Gastrocnemius medialis (tissue), 4 donors: ENCODE measurements at regions of chr17 and their contacts with region 1.

Region 1: DNA sequence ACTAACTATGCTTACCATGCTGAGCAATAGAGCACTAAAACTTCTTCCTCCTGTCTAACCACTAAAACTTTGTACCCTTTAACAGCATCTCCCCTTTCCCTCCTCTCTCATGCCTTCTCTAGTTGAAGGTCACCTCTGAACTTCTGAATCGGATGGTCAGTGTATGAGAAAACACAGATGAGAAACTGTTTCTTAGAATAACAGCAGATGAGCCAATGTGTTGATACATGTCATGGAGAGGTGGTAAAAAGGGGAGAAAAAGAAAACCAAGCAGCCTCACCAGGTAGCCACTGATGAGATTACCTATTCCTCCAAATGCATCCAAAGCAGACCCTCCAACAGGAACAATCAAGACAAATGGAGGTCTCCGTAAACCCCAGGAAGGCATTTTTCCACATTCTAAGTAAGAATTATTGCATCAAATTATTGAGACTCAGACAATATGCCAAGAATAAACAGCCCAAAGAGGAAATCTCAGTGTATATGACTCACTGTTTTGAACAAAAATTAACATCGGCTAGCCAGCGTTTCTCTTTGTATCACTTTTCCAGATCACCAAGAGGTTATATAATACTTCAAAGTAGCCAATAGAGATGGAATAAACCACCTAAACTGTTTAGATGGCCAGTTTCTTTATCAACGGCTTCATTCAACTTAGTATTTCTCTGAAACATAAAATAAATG is 793.3 kb upstream of the SOX9 start:
- DNase-seq: no peak
- ATAC-seq: no peak
- H3K4me3 ChIP-seq: no peak overlapping the region
- H3K27ac ChIP-seq: no peak overlapping the region
- H3K4me1 ChIP-seq: no peaks in the 10 kb centered on the region
- H3K27me3 ChIP-seq: no peaks in the 10 kb centered on the region
- CTCF ChIP-seq: no peak
- POLR2A ChIP-seq: no peak

Region 2: DNA sequence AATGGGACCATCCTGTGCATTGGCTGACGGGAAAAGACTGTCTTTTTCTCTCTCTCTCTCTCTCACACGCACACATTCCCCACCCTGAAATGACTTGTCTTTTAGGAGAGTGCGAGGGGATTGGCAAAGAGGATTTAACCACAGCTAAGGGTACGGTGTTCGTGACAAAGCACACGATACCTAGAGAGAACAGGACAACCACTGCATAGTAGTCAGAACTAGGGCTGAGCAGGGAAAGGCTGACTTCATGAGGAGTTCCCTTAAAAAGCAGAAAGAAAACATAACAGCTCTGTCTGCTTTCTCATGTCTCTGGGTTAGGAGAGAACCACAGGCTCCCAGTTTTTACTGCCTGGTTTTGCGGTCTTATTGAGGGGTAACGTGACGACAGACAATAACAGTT is 50.5 kb after region 1 on chr17:
- in situ Hi-C with region 1: loop called in 1 of 4 experiments (anchors 10 kb)
- intact Hi-C with region 1: no loop called
- DNase-seq: no peak
- ATAC-seq: no peak
- H3K4me3 ChIP-seq: no peak overlapping the region
- H3K27ac ChIP-seq: no peak overlapping the region
- H3K4me1 ChIP-seq: no peaks in the 10 kb centered on the region
- H3K27me3 ChIP-seq: no peaks in the 10 kb centered on the region
- CTCF ChIP-seq: no peak
- POLR2A ChIP-seq: no peak